ENCODE measurements at regions of chr12 and their contacts with region 1.

Region 1: GRCh38 chr12:57069523-57069922 is 9.1 kb downstream of the NEMP1 start:
- DNase-seq: peak; percentile 88 to 95 (median 93)
- H3K4me3 ChIP-seq: peak overlapping the region in 1 of 3 experiments; percentile 29
- H3K4me3 Mint-ChIP-seq: no peak overlapping the region
- H3K27ac ChIP-seq: peak overlapping the region in 1 of 2 donors; percentile 82
- H3K27ac Mint-ChIP-seq: peak overlapping the region; percentile 85 to 94 (median 90)
- H3K4me1 ChIP-seq: peaks cover 18 to 26% of the 10 kb centered on the region in 2 donors
- H3K4me1 Mint-ChIP-seq: peaks cover 31% of the 10 kb centered on the region
- H3K27me3 ChIP-seq: no peaks in the 10 kb centered on the region
- H3K27me3 Mint-ChIP-seq: no peaks in the 10 kb centered on the region
- CTCF ChIP-seq: peak; percentile 87

Region 2: GRCh38 chr12:57093410-57094217 is 24.1 kb after region 1 on chr12:
- intact Hi-C with region 1: loop called in 1 of 2 experiments (anchors 2 kb)
- DNase-seq: peak; percentile 27 to 55 (median 44)
- H3K4me3 ChIP-seq: no peak overlapping the region
- H3K4me3 Mint-ChIP-seq: peak overlapping the region; percentile 56 to 60
- H3K27ac ChIP-seq: peak overlapping the region; percentile 34 to 48
- H3K27ac Mint-ChIP-seq: peak overlapping the region; percentile 43 to 81 (median 68)
- H3K4me1 ChIP-seq: peaks cover 34 to 44% of the 10 kb centered on the region in 2 donors
- H3K4me1 Mint-ChIP-seq: peaks cover 39% of the 10 kb centered on the region
- H3K27me3 ChIP-seq: no peaks in the 10 kb centered on the region
- H3K27me3 Mint-ChIP-seq: peaks cover 0 to 12% (median 6%) of the 10 kb centered on the region in 3 donors
- CTCF ChIP-seq: peak; percentile 87

Region 3: GRCh38 chr12:57111031-57111734 is 41.7 kb after region 1 on chr12 and contains the start of gene STAT6:
- intact Hi-C with region 1: loop called in 1 of 2 experiments (anchors 5 kb)
- DNase-seq: peak; percentile 90 to 91 (median 90)
- H3K4me3 ChIP-seq: peak within 1 kb of the TSS; percentile 69 to 100 (median 75)
- H3K4me3 Mint-ChIP-seq: peak within 1 kb of the TSS; percentile 98 to 99
- H3K27ac ChIP-seq: peak within 1 kb of the TSS; percentile 100
- H3K27ac Mint-ChIP-seq: peak within 1 kb of the TSS; percentile 95 to 100 (median 99)
- H3K4me1 ChIP-seq: peaks cover 39 to 59% of the 10 kb centered on the region in 2 donors
- H3K4me1 Mint-ChIP-seq: peaks cover 56% of the 10 kb centered on the region
- H3K27me3 ChIP-seq: no peaks in the 10 kb centered on the region
- H3K27me3 Mint-ChIP-seq: peaks cover 0 to 5% (median 2%) of the 10 kb centered on the region in 3 donors
- CTCF ChIP-seq: no peak
- polyA plus RNA-seq, gene STAT6: 132 to 637 (median 154) TPM

Region 4: GRCh38 chr12:57175428-57176138 is 106.1 kb after region 1 on chr12:
- intact Hi-C with region 1: loop called in 1 of 2 experiments (anchors 5 kb)
- DNase-seq: peak; percentile 60 to 71 (median 61)
- H3K4me3 ChIP-seq: no peak overlapping the region
- H3K4me3 Mint-ChIP-seq: no peak overlapping the region
- H3K27ac ChIP-seq: no peak overlapping the region
- H3K27ac Mint-ChIP-seq: peak overlapping the region in 4 of 7 donors; percentile 10 to 80 (median 48)
- H3K4me1 ChIP-seq: no peaks in the 10 kb centered on the region
- H3K4me1 Mint-ChIP-seq: peaks cover 12% of the 10 kb centered on the region
- H3K27me3 ChIP-seq: no peaks in the 10 kb centered on the region
- H3K27me3 Mint-ChIP-seq: peaks cover 3 to 7% (median 7%) of the 10 kb centered on the region in 3 donors
- CTCF ChIP-seq: peak; percentile 79

Region 5: GRCh38 chr12:57182921-57183790 is 113.6 kb after region 1 on chr12:
- intact Hi-C with region 1: loop called (anchors 2 to 5 kb)
- DNase-seq: peak; percentile 43 to 61 (median 61)
- H3K4me3 ChIP-seq: no peak overlapping the region
- H3K4me3 Mint-ChIP-seq: peak overlapping the region in 1 of 2 donors; percentile 54
- H3K27ac ChIP-seq: no peak overlapping the region
- H3K27ac Mint-ChIP-seq: peak overlapping the region in 2 of 7 donors; percentile 45 to 47
- H3K4me1 ChIP-seq: no peaks in the 10 kb centered on the region
- H3K4me1 Mint-ChIP-seq: no peaks in the 10 kb centered on the region
- H3K27me3 ChIP-seq: no peaks in the 10 kb centered on the region
- H3K27me3 Mint-ChIP-seq: peaks cover 1 to 6% (median 3%) of the 10 kb centered on the region in 3 donors
- CTCF ChIP-seq: peak; percentile 87

Measured in CD14-positive monocyte (primary cell).